H1 (cell line): ENCODE measurements at regions of chr16 and their contacts with region 1.

Region 1: DNA sequence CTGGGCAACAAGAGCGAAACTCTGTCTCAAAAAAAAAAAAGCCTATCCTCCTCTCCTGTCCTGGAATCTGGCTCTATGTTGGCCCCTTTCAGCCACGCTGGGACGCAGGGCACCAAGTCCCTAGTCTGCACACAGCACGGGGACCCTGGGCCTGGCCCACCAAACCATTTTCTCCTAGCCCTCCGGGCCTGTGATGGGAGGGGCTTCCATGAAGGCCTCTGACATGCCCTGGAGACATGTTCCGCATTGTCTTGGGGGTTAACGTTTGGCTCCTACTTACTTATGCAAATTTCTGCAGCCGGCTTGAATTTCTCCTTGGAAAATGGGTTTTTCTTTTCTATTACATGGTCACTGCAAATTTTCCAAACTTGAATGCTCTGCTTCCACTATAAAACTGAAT is 12.6 kb upstream of the GPT2 start:
- DNase-seq: no peak
- H3K4me3 ChIP-seq: no peak overlapping the region
- H3K27ac ChIP-seq: no peak overlapping the region
- H3K4me1 ChIP-seq: no peaks in the 10 kb centered on the region
- H3K27me3 ChIP-seq: no peaks in the 10 kb centered on the region
- CTCF ChIP-seq: no peak
- EP300 ChIP-seq: no peak
- POLR2A ChIP-seq: no peak
- RAD21 ChIP-seq: no peak

Region 2: DNA sequence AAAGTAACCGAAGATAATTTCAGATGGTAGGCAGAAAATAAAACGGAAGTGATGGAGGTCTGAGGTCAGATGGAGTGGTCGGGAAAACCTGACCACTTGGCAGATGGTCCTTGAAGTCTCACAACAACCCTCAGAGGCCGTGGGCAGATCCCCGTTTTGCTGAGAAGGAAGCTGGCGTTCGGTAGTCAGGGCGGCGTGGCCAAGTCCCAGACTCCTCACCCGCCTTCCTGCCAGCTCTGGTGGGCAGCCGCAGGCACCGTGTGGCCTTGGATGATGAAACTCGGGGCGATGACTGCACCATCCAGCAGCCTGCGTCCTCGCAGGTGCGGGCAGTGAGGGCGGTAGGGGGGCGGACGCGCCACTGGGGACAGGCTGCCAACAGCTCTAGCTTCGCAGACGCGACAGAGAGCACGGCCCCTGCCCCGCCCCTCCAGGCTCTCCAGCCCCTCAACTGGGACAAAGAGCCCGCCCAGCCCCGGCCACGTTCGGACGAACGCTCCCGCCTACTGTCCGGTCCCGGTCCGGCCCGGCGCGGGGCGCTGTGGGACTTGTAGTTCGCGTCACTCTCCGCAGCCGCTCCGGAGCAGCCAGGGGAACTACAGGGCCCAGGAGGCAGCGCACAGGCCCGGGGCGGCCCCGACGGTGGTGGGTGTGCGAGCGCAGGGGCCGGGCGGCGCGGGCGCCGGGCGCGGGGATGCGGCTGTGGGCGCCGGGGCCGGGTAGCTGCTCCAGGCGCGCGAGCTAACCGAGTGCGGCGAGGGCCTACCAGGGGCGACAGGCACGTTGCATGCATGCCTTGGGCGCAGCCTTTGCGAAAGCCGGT is 12.3 kb after region 1 on chr16 and contains the start of gene GPT2:
- CTCF ChIA-PET with region 1: interaction called, 4 read pairs
- POLR2A ChIA-PET with region 1: interaction called, 150 read pairs
- DNase-seq: peak; percentile 88 to 97
- H3K4me3 ChIP-seq: peak within 1 kb of the TSS; percentile 85 to 95 (median 86)
- H3K27ac ChIP-seq: peak within 1 kb of the TSS; percentile 79
- H3K4me1 ChIP-seq: peaks cover 8 to 31% (median 18%) of the 10 kb centered on the region in 4 experiments
- H3K27me3 ChIP-seq: no peaks in the 10 kb centered on the region
- CTCF ChIP-seq: no peak
- EP300 ChIP-seq: no peak
- POLR2A ChIP-seq: peak; percentile 52 to 89
- RAD21 ChIP-seq: no peak
- total RNA-seq, gene GPT2: 86.3 and 94.1 TPM in 2 replicates

Region 3: GRCh38 chr16:46889942-46890300 is 18.3 kb after region 1 on chr16:
- CTCF ChIA-PET with region 1: interaction called, 4 read pairs
- POLR2A ChIA-PET with region 1: interaction called, 150 read pairs
- DNase-seq: no peak
- H3K4me3 ChIP-seq: no peak overlapping the region
- H3K27ac ChIP-seq: no peak overlapping the region
- H3K4me1 ChIP-seq: peaks cover 0 to 17% (median 11%) of the 10 kb centered on the region in 4 experiments; a peak in 6 of 7 replicates
- H3K27me3 ChIP-seq: no peaks in the 10 kb centered on the region
- CTCF ChIP-seq: no peak
- EP300 ChIP-seq: no peak
- POLR2A ChIP-seq: no peak
- RAD21 ChIP-seq: no peak

Region 4: GRCh38 chr16:46899443-46900143 is 28.0 kb after region 1 on chr16:
- CTCF ChIA-PET with region 1: interaction called, 3 read pairs
- POLR2A ChIA-PET with region 1: interaction called, 20 read pairs
- DNase-seq: no peak
- H3K4me3 ChIP-seq: no peak overlapping the region
- H3K27ac ChIP-seq: no peak overlapping the region
- H3K4me1 ChIP-seq: no peaks in the 10 kb centered on the region; a peak in 1 of 7 replicates
- H3K27me3 ChIP-seq: no peaks in the 10 kb centered on the region
- CTCF ChIP-seq: no peak
- EP300 ChIP-seq: no peak
- POLR2A ChIP-seq: no peak
- RAD21 ChIP-seq: no peak

Region 5: GRCh38 chr16:46908540-46909372 is 37.2 kb after region 1 on chr16:
- CTCF ChIA-PET with region 1: interaction called, 10 read pairs
- POLR2A ChIA-PET with region 1: interaction called, 4 read pairs
- DNase-seq: peak; percentile 27 to 81
- H3K4me3 ChIP-seq: no peak overlapping the region
- H3K27ac ChIP-seq: no peak overlapping the region; the same call in 1 of the 2 replicates
- H3K4me1 ChIP-seq: no peaks in the 10 kb centered on the region
- H3K27me3 ChIP-seq: no peaks in the 10 kb centered on the region
- CTCF ChIP-seq: peak; percentile 26 to 82 (median 66)
- EP300 ChIP-seq: no peak
- POLR2A ChIP-seq: no peak
- RAD21 ChIP-seq: peak; percentile 60 to 75